ENCODE measurements at regions of chr3 and their contacts with region 1.

Region 1: GRCh38 chr3:140128631-140129030 is 193.6 kb downstream of the CLSTN2 start:
- DNase-seq: no peak
- H3K4me3 ChIP-seq: no peak overlapping the region
- H3K27ac ChIP-seq: no peak overlapping the region
- H3K4me1 ChIP-seq: no peaks in the 10 kb centered on the region
- H3K27me3 ChIP-seq: no peaks in the 10 kb centered on the region
- CTCF ChIP-seq: no peak
- POLR2A ChIP-seq: no peak

Region 2: DNA sequence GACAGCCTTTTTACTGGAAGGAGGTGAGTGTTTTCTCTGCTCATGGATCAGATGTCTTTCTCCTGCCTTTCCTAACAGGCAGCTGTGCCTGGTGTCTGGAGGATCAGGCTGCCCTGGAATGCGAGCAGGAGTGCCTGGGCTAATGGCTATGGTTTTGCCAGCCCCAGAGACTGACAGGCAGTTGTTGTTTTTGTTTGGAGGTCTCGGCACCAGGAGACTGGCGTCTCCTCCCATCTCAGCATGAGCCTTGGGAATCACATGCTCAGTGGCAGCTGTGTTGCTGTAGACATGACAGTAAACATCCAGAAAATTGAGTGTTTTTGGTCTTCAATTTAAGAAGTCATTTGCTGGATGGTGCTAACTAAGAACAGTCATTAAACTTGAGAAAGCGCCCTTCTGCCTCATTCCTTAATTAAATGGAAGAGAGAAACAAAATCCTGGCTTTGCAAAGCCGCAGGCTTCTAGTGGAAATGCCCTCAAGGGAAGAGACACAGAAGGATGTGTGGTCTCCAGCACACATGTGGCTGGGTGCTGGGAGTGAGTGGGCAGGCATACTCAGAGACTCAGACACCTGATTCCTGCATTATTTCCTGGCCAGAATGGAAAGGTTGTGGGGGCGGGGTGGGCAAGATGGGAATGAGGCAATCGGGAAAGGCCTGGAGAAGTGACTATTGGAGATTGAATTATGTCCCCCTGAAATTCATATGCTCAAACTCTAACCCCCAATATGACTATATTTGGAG is 353.9 kb before region 1 on chr3:
- intact Hi-C with region 1: no loop called
- DNase-seq: no peak
- H3K4me3 ChIP-seq: no peak overlapping the region
- H3K27ac ChIP-seq: peak overlapping the region; percentile 10
- H3K4me1 ChIP-seq: peaks cover 6% of the 10 kb centered on the region
- H3K27me3 ChIP-seq: no peaks in the 10 kb centered on the region
- CTCF ChIP-seq: no peak
- POLR2A ChIP-seq: no peak

Region 3: GRCh38 chr3:140164922-140165590 is 36.4 kb after region 1 on chr3:
- intact Hi-C with region 1: loop called (anchors 1 kb)
- DNase-seq: no peak
- H3K4me3 ChIP-seq: no peak overlapping the region
- H3K27ac ChIP-seq: no peak overlapping the region
- H3K4me1 ChIP-seq: no peaks in the 10 kb centered on the region
- H3K27me3 ChIP-seq: no peaks in the 10 kb centered on the region
- CTCF ChIP-seq: no peak
- POLR2A ChIP-seq: no peak

Measured in vagina (tissue), 2 donors.